Heart right ventricle (tissue), 16 donors: ENCODE measurements at regions of chrX and their contacts with region 1.

Region 1: GRCh38 chrX:55598333-55598732 is 24.9 kb upstream of the FOXR2 start:
- DNase-seq: no peak
- ATAC-seq: no peak
- H3K4me3 ChIP-seq: no peak overlapping the region
- H3K27ac ChIP-seq: no peak overlapping the region
- H3K4me1 ChIP-seq: no peaks in the 10 kb centered on the region
- H3K27me3 ChIP-seq: peaks cover 0 to 6% (median 0%) of the 10 kb centered on the region in 7 donors
- CTCF ChIP-seq: no peak

Region 2: GRCh38 chrX:54728425-54728824 is 869.9 kb before region 1 on chrX:
- intact Hi-C with region 1: loop called in 1 of 10 experiments (anchors 5 kb)
- DNase-seq: no peak
- ATAC-seq: no peak
- H3K4me3 ChIP-seq: no peak overlapping the region
- H3K27ac ChIP-seq: no peak overlapping the region
- H3K4me1 ChIP-seq: no peaks in the 10 kb centered on the region
- H3K27me3 ChIP-seq: peaks cover 0 to 6% (median 0%) of the 10 kb centered on the region in 7 donors
- CTCF ChIP-seq: no peak